ENCODE measurements at regions of chr20 and their contacts with region 1.

Region 1: DNA sequence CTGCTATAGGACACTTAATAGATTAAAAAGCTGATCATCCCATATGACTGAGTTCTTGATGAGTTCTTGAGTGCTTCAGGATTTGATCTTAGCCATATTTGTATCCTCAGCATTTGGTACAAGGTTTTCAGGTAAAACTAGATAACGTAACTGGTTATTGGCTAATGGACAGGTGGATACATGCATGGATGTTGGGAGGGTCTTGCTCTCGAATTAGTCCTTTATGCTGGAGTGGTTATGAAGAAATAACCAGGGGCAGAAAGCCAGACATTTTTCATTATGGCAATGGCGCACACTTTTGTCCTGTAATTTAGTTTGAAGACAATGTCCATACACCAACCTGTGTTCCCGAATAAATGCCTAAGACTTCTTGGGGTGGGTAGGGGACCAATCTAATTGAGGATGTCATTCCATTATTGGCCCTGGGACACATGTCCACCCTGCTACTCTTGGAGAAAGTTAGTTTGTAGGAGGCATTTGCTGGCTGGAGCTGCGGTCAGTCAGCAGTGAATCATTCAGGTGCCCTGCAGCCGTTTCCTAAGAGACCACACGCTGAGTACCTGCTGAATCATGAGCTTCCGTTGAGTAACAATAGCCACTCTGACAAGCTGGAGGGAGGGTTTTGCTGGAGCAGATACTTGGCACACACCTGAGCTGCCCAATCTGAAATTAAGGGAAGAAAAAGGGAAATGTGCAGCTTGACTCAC is 194.4 kb downstream of the FOXA2 start:
- DNase-seq: no peak

Region 2: GRCh38 chr20:22453239-22454080 is 63.5 kb after region 1 on chr20:
- intact Hi-C with region 1: loop called (anchors 2 kb)
- DNase-seq: no peak